ENCODE measurements at regions of chr1 and their contacts with region 1.

Region 1: GRCh38 chr1:60727552-60727951 is 354.8 kb upstream of the NFIA start:
- DNase-seq: no peak
- ATAC-seq: no peak
- H3K4me3 ChIP-seq: no peak overlapping the region
- H3K27ac ChIP-seq: no peak overlapping the region
- H3K4me1 ChIP-seq: no peaks in the 10 kb centered on the region
- H3K27me3 ChIP-seq: no peaks in the 10 kb centered on the region
- CTCF ChIP-seq: no peak
- EP300 ChIP-seq: no peak
- POLR2A ChIP-seq: no peak
- RAD21 ChIP-seq: no peak

Region 2: GRCh38 chr1:60797351-60797750 is 69.8 kb after region 1 on chr1:
- CTCF ChIA-PET with region 1: no interaction called
- POLR2A ChIA-PET with region 1: interaction called, 10 read pairs
- RAD21 ChIA-PET with region 1: no interaction called
- SMC1A ChIA-PET with region 1: no interaction called
- in situ Hi-C with region 1: no loop called
- intact Hi-C with region 1: no loop called
- DNase-seq: no peak
- ATAC-seq: no peak
- H3K4me3 ChIP-seq: no peak overlapping the region
- H3K27ac ChIP-seq: no peak overlapping the region
- H3K4me1 ChIP-seq: no peaks in the 10 kb centered on the region
- H3K27me3 ChIP-seq: no peaks in the 10 kb centered on the region
- CTCF ChIP-seq: no peak
- EP300 ChIP-seq: no peak
- POLR2A ChIP-seq: no peak
- RAD21 ChIP-seq: no peak